Common myeloid progenitor, CD34-positive (primary cell): ENCODE measurements at regions of chr6 and their contacts with region 1.

Region 1: GRCh38 chr6:31580807-31581433 is 1.3 kb downstream of the LTB start:
- DNase-seq: peak; percentile 81 to 86 (median 85)
- H3K4me3 ChIP-seq: peak overlapping the region; percentile 85 to 96 (median 91)
- H3K27ac ChIP-seq: peak overlapping the region; percentile 46 to 83
- H3K4me1 ChIP-seq: peaks cover 12 to 65% (median 57%) of the 10 kb centered on the region in 4 experiments
- H3K27me3 ChIP-seq: no peaks in the 10 kb centered on the region

Region 2: DNA sequence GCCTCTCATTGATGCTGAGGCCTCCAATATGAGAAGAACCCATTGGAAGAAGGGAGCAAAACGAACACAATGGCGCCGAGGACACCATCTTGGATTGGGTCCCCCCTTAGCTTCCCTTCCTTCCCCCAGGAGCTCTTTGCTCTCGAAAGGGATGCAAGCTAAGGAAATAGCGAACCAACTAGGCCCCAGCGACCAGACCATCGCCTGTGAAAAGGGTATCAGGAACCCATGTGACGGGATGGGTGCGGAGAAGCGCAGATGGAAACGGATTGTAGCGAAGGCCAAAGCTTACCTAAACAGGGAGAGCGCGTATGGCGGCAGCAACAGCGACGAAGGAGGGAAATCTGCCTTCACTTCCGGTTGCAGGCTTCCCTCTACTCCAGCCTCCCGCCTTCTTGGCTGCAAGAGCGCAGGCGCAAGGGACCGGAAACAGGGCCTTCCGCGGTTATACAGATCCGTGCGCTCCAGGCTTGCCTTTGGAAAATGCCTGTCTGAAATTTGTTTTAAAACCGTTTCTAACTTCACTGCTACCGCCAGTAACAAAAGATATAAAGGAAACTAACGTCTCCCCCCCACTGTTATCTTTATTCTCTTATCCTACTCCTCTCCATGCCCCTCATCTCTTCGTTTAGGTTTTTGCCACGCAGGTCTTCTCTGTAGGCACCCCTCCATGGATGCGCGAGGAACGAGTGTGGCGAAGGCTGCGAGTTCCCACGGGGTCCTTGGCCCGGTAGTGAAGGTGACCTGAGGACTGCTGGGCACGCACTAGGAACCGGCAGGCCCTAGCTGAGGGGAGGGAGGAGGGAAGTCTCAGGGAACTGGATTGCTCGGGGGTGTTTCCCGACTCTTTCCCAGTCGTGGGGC is 39.0 kb before region 1 on chr6 and contains the start of gene DDX39B:
- CTCF ChIA-PET with region 1: interaction called, 557 read pairs
- POLR2A ChIA-PET with region 1: interaction called, 5 read pairs
- DNase-seq: peak; percentile 98 to 99 (median 99)
- H3K4me3 ChIP-seq: peak within 1 kb of the TSS; percentile 66 to 97 (median 91)
- H3K27ac ChIP-seq: peak within 1 kb of the TSS; percentile 99 to 100
- H3K4me1 ChIP-seq: peaks cover 17 to 47% (median 40%) of the 10 kb centered on the region in 4 experiments
- H3K27me3 ChIP-seq: no peaks in the 10 kb centered on the region

Region 3: DNA sequence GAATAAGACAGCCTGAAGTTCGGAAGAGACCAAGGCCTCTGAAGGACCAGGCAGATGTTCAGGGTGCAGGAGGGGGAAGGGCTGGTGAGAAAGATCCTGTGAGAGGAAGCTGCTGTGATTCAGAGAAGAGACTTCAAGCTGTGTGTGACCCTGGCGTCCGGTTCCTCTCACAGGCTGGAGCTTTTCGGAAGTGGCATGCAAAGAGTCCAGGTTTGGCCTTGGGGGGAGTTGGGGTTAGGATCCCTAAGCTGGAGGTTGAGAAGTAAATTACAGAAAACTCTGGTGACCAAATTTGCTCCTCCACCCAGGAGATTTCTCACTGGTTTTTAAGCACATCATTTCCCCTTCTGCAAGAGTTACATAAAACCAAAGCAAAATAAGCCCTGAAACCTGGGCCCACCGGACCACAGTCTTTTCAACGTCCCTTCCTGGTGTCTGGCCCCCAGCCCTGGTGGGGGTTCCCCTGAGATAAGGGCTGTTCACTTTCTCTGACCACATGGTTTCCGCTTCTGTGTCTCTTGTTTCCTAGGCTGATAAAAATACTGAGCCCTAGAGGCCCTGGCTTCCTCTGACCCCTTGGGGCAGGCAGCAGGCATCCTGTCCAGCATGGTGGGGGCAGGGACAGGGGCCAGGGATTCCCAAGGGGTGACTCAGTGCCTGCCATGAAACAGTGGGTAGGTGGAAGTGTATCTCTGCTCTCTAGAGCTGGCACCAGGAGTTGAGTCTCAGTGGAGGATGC is 20.8 kb before region 1 on chr6:
- CTCF ChIA-PET with region 1: interaction called, 557 read pairs
- POLR2A ChIA-PET with region 1: interaction called, 13 read pairs
- DNase-seq: peak; percentile 58 to 91 (median 87)
- H3K4me3 ChIP-seq: peak overlapping the region; percentile 16 to 64 (median 41)
- H3K27ac ChIP-seq: peak overlapping the region in 1 of 2 experiments; percentile 69
- H3K4me1 ChIP-seq: peaks cover 30 to 83% (median 62%) of the 10 kb centered on the region in 4 experiments
- H3K27me3 ChIP-seq: no peaks in the 10 kb centered on the region

Region 4: GRCh38 chr6:31568537-31568961 is 12.4 kb before region 1 on chr6:
- CTCF ChIA-PET with region 1: interaction called, 139 read pairs
- POLR2A ChIA-PET with region 1: no interaction called
- DNase-seq: peak in 2 of 3 donors; percentile 63 to 66
- H3K4me3 ChIP-seq: no peak overlapping the region
- H3K27ac ChIP-seq: no peak overlapping the region
- H3K4me1 ChIP-seq: peaks cover 2 to 35% (median 10%) of the 10 kb centered on the region in 4 experiments
- H3K27me3 ChIP-seq: no peaks in the 10 kb centered on the region